ENCODE measurements at regions of chr7 and their contacts with region 1.

Region 1: GRCh38 chr7:158695726-158696452 is 8.7 kb downstream of the NCAPG2 start:
- DNase-seq: peak; percentile 70
- H3K4me3 ChIP-seq: no peak overlapping the region
- H3K27ac ChIP-seq: peak overlapping the region in 1 of 2 donors; percentile 39
- H3K4me1 ChIP-seq: no peaks in the 10 kb centered on the region
- H3K27me3 ChIP-seq: no peaks in the 10 kb centered on the region
- CTCF ChIP-seq: peak; percentile 49 to 84 (median 64)
- POLR2A ChIP-seq: no peak

Region 2: GRCh38 chr7:158646766-158647447 is 49.0 kb before region 1 on chr7:
- intact Hi-C with region 1: no loop called
- DNase-seq: no peak
- H3K4me3 ChIP-seq: no peak overlapping the region
- H3K27ac ChIP-seq: no peak overlapping the region
- H3K4me1 ChIP-seq: no peaks in the 10 kb centered on the region
- H3K27me3 ChIP-seq: no peaks in the 10 kb centered on the region
- CTCF ChIP-seq: peak in 2 of 4 experiments; percentile 18 to 20
- POLR2A ChIP-seq: no peak

Region 3: DNA sequence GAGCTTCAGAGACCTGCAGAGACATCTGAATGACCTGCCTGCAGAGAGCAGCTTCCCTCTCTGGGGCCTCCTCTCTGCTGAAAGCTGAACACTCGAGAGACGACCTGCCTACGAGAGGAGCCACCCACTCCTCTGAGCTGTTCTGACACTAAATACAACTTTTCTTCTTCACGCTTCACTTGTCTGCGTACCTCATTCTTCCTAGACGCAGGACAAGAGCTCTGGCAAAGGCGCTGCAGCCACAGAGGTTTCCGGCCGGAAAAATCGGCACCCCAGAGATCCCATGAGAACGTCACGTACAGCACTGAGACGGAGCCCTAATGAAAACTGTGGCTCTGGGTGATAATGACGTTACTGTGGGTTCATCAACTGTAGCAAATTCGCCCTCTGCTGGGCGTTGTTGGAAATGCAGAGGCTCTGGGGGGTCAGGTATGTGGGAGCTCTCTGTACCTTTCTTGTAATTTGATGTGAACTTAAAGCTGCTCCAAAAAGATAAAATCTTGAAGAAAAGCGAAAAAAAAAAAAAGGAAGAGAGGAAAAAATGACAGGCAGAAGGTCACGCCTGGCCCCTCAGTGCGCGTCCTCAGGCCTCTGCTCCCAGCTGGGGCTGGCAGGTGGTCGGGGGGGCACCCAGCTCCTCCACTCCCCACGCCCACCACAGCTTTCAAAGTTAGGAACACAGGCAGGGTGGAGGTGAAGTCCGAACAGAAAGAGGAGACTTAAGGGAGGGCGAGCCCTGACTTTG is 281.1 kb after region 1 on chr7:
- intact Hi-C with region 1: loop called (anchors 2 kb)
- DNase-seq: peak; percentile 75
- H3K4me3 ChIP-seq: no peak overlapping the region
- H3K27ac ChIP-seq: no peak overlapping the region
- H3K4me1 ChIP-seq: no peaks in the 10 kb centered on the region
- H3K27me3 ChIP-seq: no peaks in the 10 kb centered on the region
- CTCF ChIP-seq: peak; percentile 64 to 88 (median 82)
- POLR2A ChIP-seq: no peak